GM12878 (cell line): ENCODE measurements at regions of chrX and their contacts with region 1.

Region 1: GRCh38 chrX:16023790-16024734 is 99.3 kb upstream of the GRPR start:
- DNase-seq: peak; percentile 77
- ATAC-seq: peak; percentile 96
- H3K4me3 ChIP-seq: no peak overlapping the region
- H3K27ac ChIP-seq: peak overlapping the region; percentile 24; the same call in 1 of the 2 replicates
- H3K4me1 ChIP-seq: peaks cover 4% of the 10 kb centered on the region; the same call in 1 of the 2 replicates
- H3K27me3 ChIP-seq: 0 out of 4 replicates have a peak, but pooled peaks cover 0 to 2% of the 10 kb centered on the region in 2 experiments
- CTCF ChIP-seq: no peak
- EP300 ChIP-seq: peak; percentile 84 to 88; a peak in 3 of 4 replicates
- POLR2A ChIP-seq: no peak
- RAD21 ChIP-seq: no peak

Region 2: DNA sequence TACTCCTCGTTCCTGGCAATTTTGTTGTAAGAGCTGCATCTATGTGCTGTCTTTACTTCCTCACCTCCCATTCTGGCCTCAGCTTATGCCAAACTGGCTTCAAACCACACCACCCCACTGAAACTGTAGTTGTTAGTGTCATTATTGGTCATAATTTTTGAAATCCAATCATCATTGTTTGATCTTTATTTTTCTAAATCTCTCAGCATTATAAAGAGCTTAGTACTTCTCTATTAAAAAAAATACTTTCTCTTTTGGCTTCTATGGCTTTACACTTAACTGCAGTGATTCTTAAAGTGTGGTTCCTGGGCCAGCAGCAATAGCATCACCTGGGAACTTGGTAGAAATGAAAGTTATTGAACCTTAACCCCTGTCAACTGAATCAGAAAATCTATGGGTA is 15.8 kb after region 1 on chrX:
- CTCF ChIA-PET with region 1: interaction called, 3 read pairs
- POLR2A ChIA-PET with region 1: no interaction called
- RAD21 ChIA-PET with region 1: no interaction called
- SMC1A ChIA-PET with region 1: interaction called, 16 read pairs
- in situ Hi-C with region 1: no loop called
- intact Hi-C with region 1: no loop called
- DNase-seq: no peak
- ATAC-seq: peak; percentile 83
- H3K4me3 ChIP-seq: no peak overlapping the region
- H3K27ac ChIP-seq: peak overlapping the region; percentile 8; the same call in 1 of the 2 replicates
- H3K4me1 ChIP-seq: peaks cover 3% of the 10 kb centered on the region; the same call in 1 of the 2 replicates
- H3K27me3 ChIP-seq: no peaks in the 10 kb centered on the region
- CTCF ChIP-seq: no peak
- EP300 ChIP-seq: no peak
- POLR2A ChIP-seq: no peak
- RAD21 ChIP-seq: no peak

Region 3: DNA sequence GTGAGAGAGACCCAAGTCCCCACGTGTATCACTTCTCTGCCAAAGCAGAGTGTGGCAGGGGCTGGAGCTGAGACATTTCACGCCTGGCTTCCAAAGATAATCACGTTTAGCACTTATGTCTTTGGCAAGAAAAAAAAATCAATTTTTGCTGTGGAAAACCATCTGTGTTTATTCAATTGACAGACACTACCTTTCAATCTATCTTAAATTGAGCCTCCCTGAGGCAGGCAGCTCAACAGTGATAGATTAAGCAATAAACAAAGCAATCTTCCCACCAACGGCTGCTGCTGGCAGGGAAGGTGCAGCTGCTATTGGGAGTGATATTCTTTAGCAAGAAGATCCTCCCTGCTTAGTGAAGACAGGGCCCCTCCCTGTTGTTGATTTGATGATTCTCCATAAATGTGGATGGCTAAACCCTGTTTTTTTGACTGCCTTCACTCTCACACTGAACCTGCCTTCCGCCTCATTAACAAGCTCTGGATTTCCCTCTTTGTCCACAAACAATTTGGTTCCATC is 131.6 kb after region 1 on chrX:
- CTCF ChIA-PET with region 1: no interaction called
- POLR2A ChIA-PET with region 1: no interaction called
- RAD21 ChIA-PET with region 1: no interaction called
- SMC1A ChIA-PET with region 1: no interaction called
- in situ Hi-C with region 1: no loop called
- intact Hi-C with region 1: no loop called
- DNase-seq: no peak
- ATAC-seq: no peak
- H3K4me3 ChIP-seq: no peak overlapping the region
- H3K27ac ChIP-seq: no peak overlapping the region
- H3K4me1 ChIP-seq: no peaks in the 10 kb centered on the region
- H3K27me3 ChIP-seq: no peaks in the 10 kb centered on the region
- CTCF ChIP-seq: no peak
- EP300 ChIP-seq: no peak
- POLR2A ChIP-seq: no peak
- RAD21 ChIP-seq: no peak